SK-N-SH (cell line): ENCODE measurements at regions of chr1 and their contacts with region 1.

Region 1: GRCh38 chr1:27097484-27097917 is 57.4 kb downstream of the SLC9A1 start:
- DNase-seq: peak; percentile 91
- H3K4me3 ChIP-seq: peak overlapping the region in 1 of 2 experiments; percentile 36; a peak in 1 of 4 replicates
- H3K27ac ChIP-seq: no peak overlapping the region
- H3K4me1 ChIP-seq: peaks cover 15 to 19% of the 10 kb centered on the region in 2 experiments; a peak in 3 of 4 replicates
- H3K27me3 ChIP-seq: no peaks in the 10 kb centered on the region
- CTCF ChIP-seq: peak; percentile 97
- EP300 ChIP-seq: no peak
- RAD21 ChIP-seq: peak; percentile 96

Region 2: GRCh38 chr1:26833432-26834405 is 263.8 kb before region 1 on chr1:
- CTCF ChIA-PET with region 1: no interaction called
- POLR2A ChIA-PET with region 1: no interaction called
- DNase-seq: no peak
- H3K4me3 ChIP-seq: no peak overlapping the region
- H3K27ac ChIP-seq: no peak overlapping the region
- H3K4me1 ChIP-seq: peaks cover 0 to 7% of the 10 kb centered on the region in 2 experiments; a peak in 1 of 4 replicates
- H3K27me3 ChIP-seq: no peaks in the 10 kb centered on the region
- CTCF ChIP-seq: no peak
- EP300 ChIP-seq: no peak
- RAD21 ChIP-seq: no peak

Region 3: GRCh38 chr1:27071049-27071416 is 26.5 kb before region 1 on chr1:
- CTCF ChIA-PET with region 1: interaction called, 11 read pairs
- POLR2A ChIA-PET with region 1: no interaction called
- DNase-seq: peak; percentile 86
- H3K4me3 ChIP-seq: no peak overlapping the region
- H3K27ac ChIP-seq: no peak overlapping the region
- H3K4me1 ChIP-seq: peaks cover 0 to 11% of the 10 kb centered on the region in 2 experiments; a peak in 1 of 4 replicates
- H3K27me3 ChIP-seq: no peaks in the 10 kb centered on the region
- CTCF ChIP-seq: no peak
- EP300 ChIP-seq: no peak
- RAD21 ChIP-seq: no peak

Region 4: GRCh38 chr1:27111626-27112573 is 14.4 kb after region 1 on chr1:
- CTCF ChIA-PET with region 1: interaction called, 71 read pairs
- POLR2A ChIA-PET with region 1: no interaction called
- DNase-seq: peak; percentile 63
- H3K4me3 ChIP-seq: no peak overlapping the region
- H3K27ac ChIP-seq: peak overlapping the region; percentile 34 to 83
- H3K4me1 ChIP-seq: peaks cover 9 to 17% of the 10 kb centered on the region in 2 experiments; a peak in 3 of 4 replicates
- H3K27me3 ChIP-seq: no peaks in the 10 kb centered on the region
- CTCF ChIP-seq: peak; percentile 54
- EP300 ChIP-seq: peak in 1 of 2 experiments; percentile 47; a peak in 1 of 4 replicates
- RAD21 ChIP-seq: peak; percentile 70

Region 5: GRCh38 chr1:27234049-27234882 is 136.8 kb after region 1 on chr1 and contains the start of gene WDTC1:
- CTCF ChIA-PET with region 1: no interaction called
- POLR2A ChIA-PET with region 1: no interaction called
- DNase-seq: peak; percentile 97
- H3K4me3 ChIP-seq: peak within 1 kb of the TSS; percentile 63 to 70
- H3K27ac ChIP-seq: peak within 1 kb of the TSS; percentile 2 to 36; a peak in 2 of 4 replicates
- H3K4me1 ChIP-seq: peaks cover 8 to 15% of the 10 kb centered on the region in 2 experiments; a peak in 3 of 4 replicates
- H3K27me3 ChIP-seq: no peaks in the 10 kb centered on the region
- CTCF ChIP-seq: no peak
- EP300 ChIP-seq: no peak
- RAD21 ChIP-seq: no peak
- polyA plus RNA-seq, gene WDTC1: 7.8 and 12.0 TPM in 2 replicates